CD4-positive, alpha-beta memory T cell (primary cell): ENCODE measurements at regions of chr18 and their contacts with region 1.

Region 1: GRCh38 chr18:57630002-57630753 is 8.5 kb upstream of the NARS1 start:
- DNase-seq: peak; percentile 92 to 94 (median 93)
- H3K4me3 ChIP-seq: peak overlapping the region; percentile 66 to 72
- H3K4me3 Mint-ChIP-seq: peak overlapping the region; percentile 97 to 99 (median 98)
- H3K27ac ChIP-seq: peak overlapping the region; percentile 81
- H3K27ac Mint-ChIP-seq: peak overlapping the region; percentile 94 to 99 (median 98)
- H3K4me1 ChIP-seq: peaks cover 22% of the 10 kb centered on the region
- H3K4me1 Mint-ChIP-seq: peaks cover 11 to 20% (median 17%) of the 10 kb centered on the region in 4 donors
- H3K27me3 ChIP-seq: no peaks in the 10 kb centered on the region
- H3K27me3 Mint-ChIP-seq: no peaks in the 10 kb centered on the region

Region 2: GRCh38 chr18:56638271-56639093 is 991.7 kb before region 1 on chr18 and contains the start of gene TXNL1:
- CTCF ChIA-PET with region 1: no interaction called
- POLR2A ChIA-PET with region 1: no interaction called
- intact Hi-C with region 1: loop called (anchors 1 kb)
- DNase-seq: peak; percentile 97 to 99 (median 98)
- H3K4me3 ChIP-seq: peak within 1 kb of the TSS; percentile 64 to 93
- H3K4me3 Mint-ChIP-seq: peak within 1 kb of the TSS; percentile 95 to 100 (median 99)
- H3K27ac ChIP-seq: peak within 1 kb of the TSS; percentile 80
- H3K27ac Mint-ChIP-seq: peak within 1 kb of the TSS; percentile 89 to 99 (median 98)
- H3K4me1 ChIP-seq: peaks cover 42% of the 10 kb centered on the region
- H3K4me1 Mint-ChIP-seq: peaks cover 37 to 53% (median 45%) of the 10 kb centered on the region in 4 donors
- H3K27me3 ChIP-seq: no peaks in the 10 kb centered on the region
- H3K27me3 Mint-ChIP-seq: no peaks in the 10 kb centered on the region
- total RNA-seq, gene TXNL1: 41.4 to 42.3 TPM

Region 3: GRCh38 chr18:57333940-57334339 is 296.2 kb before region 1 on chr18:
- CTCF ChIA-PET with region 1: no interaction called
- POLR2A ChIA-PET with region 1: no interaction called
- intact Hi-C with region 1: no loop called
- DNase-seq: no peak
- H3K4me3 ChIP-seq: no peak overlapping the region
- H3K4me3 Mint-ChIP-seq: no peak overlapping the region
- H3K27ac ChIP-seq: no peak overlapping the region
- H3K27ac Mint-ChIP-seq: no peak overlapping the region
- H3K4me1 ChIP-seq: no peaks in the 10 kb centered on the region
- H3K4me1 Mint-ChIP-seq: no peaks in the 10 kb centered on the region
- H3K27me3 ChIP-seq: no peaks in the 10 kb centered on the region
- H3K27me3 Mint-ChIP-seq: peaks cover under 1 to 5% of the 10 kb centered on the region in 2 donors

Region 4: DNA sequence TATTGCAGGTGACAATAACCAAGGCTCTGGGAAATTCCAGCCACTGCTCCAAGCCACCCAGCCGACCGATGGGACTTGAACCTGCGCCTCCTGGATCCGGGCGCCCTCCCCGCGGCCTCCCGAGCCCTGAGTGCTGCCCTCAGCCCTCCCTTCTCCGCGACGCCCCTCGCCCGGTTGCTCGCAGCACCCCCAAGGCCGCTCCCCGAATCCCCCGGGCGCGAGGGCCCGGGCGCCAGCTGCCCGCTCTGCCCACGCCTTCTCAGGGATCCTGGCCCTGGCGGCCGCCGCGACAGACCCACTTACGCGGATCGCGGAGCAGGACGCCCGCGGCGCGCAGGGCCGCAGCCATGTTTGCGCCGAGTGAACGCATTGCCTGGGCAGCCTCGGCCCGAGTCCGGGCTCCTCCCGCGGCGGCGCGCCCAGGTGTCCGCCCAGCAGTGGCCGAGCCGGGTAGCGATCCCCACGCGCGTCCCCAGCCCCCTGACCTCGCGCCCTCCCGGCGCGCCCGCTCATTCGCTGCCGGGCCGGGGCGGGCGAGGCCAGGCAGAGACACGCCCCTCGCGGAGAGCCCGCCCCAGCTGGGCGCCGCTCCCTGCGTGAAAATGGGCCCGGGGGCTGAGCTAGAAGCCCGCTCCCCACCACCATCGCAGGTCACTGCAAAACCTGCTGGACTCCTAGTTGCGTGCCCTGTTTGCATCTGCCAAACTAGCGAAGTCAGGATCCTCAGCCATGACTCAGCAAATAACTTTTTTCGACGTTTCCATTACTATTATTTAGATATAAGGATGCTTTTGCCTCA is 43.7 kb before region 1 on chr18 and contains the start of gene FECH:
- CTCF ChIA-PET with region 1: interaction called, 3 read pairs
- POLR2A ChIA-PET with region 1: interaction called, 3 read pairs
- intact Hi-C with region 1: loop called (anchors 2 kb)
- DNase-seq: peak; percentile 67 to 75 (median 70)
- H3K4me3 ChIP-seq: peak within 1 kb of the TSS; percentile 26 to 81
- H3K4me3 Mint-ChIP-seq: peak within 1 kb of the TSS; percentile 87 to 92 (median 88)
- H3K27ac ChIP-seq: peak within 1 kb of the TSS; percentile 56
- H3K27ac Mint-ChIP-seq: peak within 1 kb of the TSS; percentile 57 to 94 (median 86)
- H3K4me1 ChIP-seq: peaks cover 21% of the 10 kb centered on the region
- H3K4me1 Mint-ChIP-seq: peaks cover 13 to 33% (median 21%) of the 10 kb centered on the region in 4 donors
- H3K27me3 ChIP-seq: no peaks in the 10 kb centered on the region
- H3K27me3 Mint-ChIP-seq: no peaks in the 10 kb centered on the region
- total RNA-seq, gene FECH: 14.8 to 16.1 TPM

Region 5: GRCh38 chr18:58124475-58124874 is 494.3 kb after region 1 on chr18:
- CTCF ChIA-PET with region 1: interaction called, 3 read pairs
- POLR2A ChIA-PET with region 1: no interaction called
- intact Hi-C with region 1: loop called (anchors 5 kb)
- DNase-seq: no peak
- H3K4me3 ChIP-seq: no peak overlapping the region
- H3K4me3 Mint-ChIP-seq: peak overlapping the region in 2 of 8 donors; percentile 0 to 2
- H3K27ac ChIP-seq: no peak overlapping the region
- H3K27ac Mint-ChIP-seq: no peak overlapping the region
- H3K4me1 ChIP-seq: no peaks in the 10 kb centered on the region
- H3K4me1 Mint-ChIP-seq: peaks cover 0 to 5% (median 3%) of the 10 kb centered on the region in 4 donors
- H3K27me3 ChIP-seq: no peaks in the 10 kb centered on the region
- H3K27me3 Mint-ChIP-seq: no peaks in the 10 kb centered on the region

Region 6: DNA sequence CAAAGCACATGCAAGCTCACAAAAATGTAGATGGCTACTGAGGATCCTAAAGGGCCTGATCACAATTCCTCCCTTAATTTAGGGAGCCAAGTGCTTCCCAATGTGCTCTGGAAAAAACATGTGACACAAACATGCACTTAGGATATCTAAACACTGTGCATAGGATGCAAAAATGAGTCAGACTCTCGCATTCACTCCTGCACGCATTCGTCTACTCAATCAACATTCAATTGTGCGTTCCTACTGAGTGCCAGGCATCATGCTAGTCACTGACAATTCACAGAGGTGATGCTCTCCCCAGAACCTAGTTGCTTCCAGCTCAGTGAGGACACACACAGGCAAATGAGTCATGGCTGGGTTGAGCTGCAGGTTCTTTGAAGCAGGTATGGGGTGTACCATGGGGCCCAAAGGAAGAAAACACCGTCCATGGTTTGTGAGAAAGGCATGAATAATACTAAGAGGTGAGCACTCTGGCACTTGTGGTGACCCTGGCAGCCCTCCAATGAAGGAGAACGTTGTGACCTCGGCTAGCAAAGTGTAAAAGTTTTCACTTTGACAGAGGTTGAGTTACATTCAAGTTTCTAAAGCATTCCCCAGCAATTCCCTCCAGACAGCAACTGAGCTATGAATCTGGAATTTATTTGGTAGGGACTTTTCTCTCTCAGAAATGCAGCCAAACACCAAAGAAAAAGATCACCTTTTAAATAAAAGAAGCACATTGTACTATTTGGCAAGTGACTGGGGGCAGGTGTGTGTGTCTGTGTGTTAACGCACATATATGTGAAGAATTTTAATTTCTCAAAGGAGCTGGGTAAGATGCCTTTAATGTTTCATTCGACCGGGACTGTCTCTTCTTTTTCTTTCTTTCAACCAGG is 825.4 kb after region 1 on chr18:
- CTCF ChIA-PET with region 1: no interaction called
- POLR2A ChIA-PET with region 1: no interaction called
- intact Hi-C with region 1: no loop called
- DNase-seq: no peak
- H3K4me3 ChIP-seq: no peak overlapping the region
- H3K4me3 Mint-ChIP-seq: no peak overlapping the region
- H3K27ac ChIP-seq: no peak overlapping the region
- H3K27ac Mint-ChIP-seq: no peak overlapping the region
- H3K4me1 ChIP-seq: no peaks in the 10 kb centered on the region
- H3K4me1 Mint-ChIP-seq: no peaks in the 10 kb centered on the region
- H3K27me3 ChIP-seq: no peaks in the 10 kb centered on the region
- H3K27me3 Mint-ChIP-seq: peaks cover 2 to 7% of the 10 kb centered on the region in 2 donors

Region 7: DNA sequence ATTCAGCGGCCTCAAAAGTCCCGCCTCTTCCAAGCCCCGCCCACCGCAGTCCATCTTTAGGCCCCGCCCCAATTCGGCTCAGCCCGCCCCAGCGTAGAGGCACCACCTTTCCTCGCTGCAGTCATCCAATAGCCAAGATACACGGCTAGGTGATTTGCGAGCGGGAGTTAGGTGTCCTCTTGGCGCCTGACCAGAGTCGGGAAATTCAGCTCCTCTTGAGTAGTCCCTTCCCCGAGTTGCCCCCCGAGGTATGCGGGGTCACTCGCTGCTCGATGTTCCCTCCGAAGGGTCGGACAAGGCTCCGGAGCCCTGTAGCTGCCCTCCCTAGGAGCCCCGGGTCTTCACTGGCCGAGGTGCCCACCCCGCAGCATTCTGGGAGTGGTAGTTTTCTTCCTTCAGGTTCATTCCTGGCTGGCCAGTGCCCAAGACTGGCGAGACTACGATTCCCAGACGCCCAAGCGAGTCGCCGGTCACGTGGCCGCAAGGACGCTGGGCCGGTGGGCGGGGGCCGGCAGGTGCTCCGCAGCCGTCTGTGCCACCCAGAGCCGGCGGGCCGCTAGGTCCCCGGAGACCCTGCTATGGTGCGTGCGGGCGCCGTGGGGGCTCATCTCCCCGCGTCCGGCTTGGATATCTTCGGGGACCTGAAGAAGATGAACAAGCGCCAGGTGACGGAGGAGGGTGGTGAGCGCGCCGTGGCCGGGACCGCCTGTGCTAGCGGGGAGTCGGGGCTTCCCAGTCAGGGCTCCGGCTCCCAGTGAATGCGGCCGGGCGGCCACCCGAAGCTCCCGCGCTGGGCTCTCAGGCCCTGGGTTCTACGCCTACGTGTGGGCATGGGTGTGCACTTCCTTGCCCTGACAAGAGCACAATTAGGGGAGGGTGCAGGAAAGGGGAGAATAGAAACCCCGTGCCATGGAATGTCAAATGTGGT is 1509.5 kb after region 1 on chr18 and contains the start of gene SEC11C:
- CTCF ChIA-PET with region 1: no interaction called
- POLR2A ChIA-PET with region 1: no interaction called
- intact Hi-C with region 1: loop called (anchors 1 kb)
- DNase-seq: peak; percentile 98 to 99 (median 98)
- H3K4me3 ChIP-seq: peak within 1 kb of the TSS; percentile 59 to 88
- H3K4me3 Mint-ChIP-seq: peak within 1 kb of the TSS; percentile 92 to 97 (median 95)
- H3K27ac ChIP-seq: peak within 1 kb of the TSS; percentile 91
- H3K27ac Mint-ChIP-seq: peak within 1 kb of the TSS; percentile 99 to 100 (median 100)
- H3K4me1 ChIP-seq: peaks cover 45% of the 10 kb centered on the region
- H3K4me1 Mint-ChIP-seq: peaks cover 29 to 53% (median 39%) of the 10 kb centered on the region in 4 donors
- H3K27me3 ChIP-seq: no peaks in the 10 kb centered on the region
- H3K27me3 Mint-ChIP-seq: peaks cover 6 to 7% of the 10 kb centered on the region in 2 donors
- total RNA-seq, gene SEC11C: 85.1 to 89.3 TPM